Dorsolateral prefrontal cortex (tissue), 120 donors: ENCODE measurements at regions of chr17 and their contacts with region 1.

Region 1: GRCh38 chr17:21275579-21276263 is 8.8 kb upstream of the MAP2K3 start:
- DNase-seq: peak; percentile 92 to 98 (median 96)
- H3K4me3 ChIP-seq: peak overlapping the region; percentile 48 to 98 (median 79)
- H3K27ac ChIP-seq: peak overlapping the region in 50 of 59 donors; percentile 0 to 90 (median 72)
- H3K27me3 ChIP-seq: no peaks in the 10 kb centered on the region
- CTCF ChIP-seq: peak in 40 of 56 donors; percentile 5 to 58 (median 26)

Region 2: GRCh38 chr17:21126645-21127510 is 148.8 kb before region 1 on chr17 and contains the start of gene DHRS7B:
- intact Hi-C with region 1: loop called in 1 of 2 experiments (anchors 5 kb)
- DNase-seq: peak; percentile 92 to 98 (median 96)
- H3K4me3 ChIP-seq: peak within 1 kb of the TSS; percentile 64 to 100 (median 90)
- H3K27ac ChIP-seq: peak within 1 kb of the TSS in 58 of 59 donors; percentile 15 to 94 (median 74)
- H3K27me3 ChIP-seq: no peaks in the 10 kb centered on the region
- CTCF ChIP-seq: peak in 21 of 56 donors; percentile 10 to 48 (median 21)
- total RNA-seq, gene DHRS7B: 13.4 to 31.5 (median 21.3) TPM

Region 3: GRCh38 chr17:21214015-21214776 is 61.5 kb before region 1 on chr17 and contains the start of gene TMEM11:
- intact Hi-C with region 1: loop called (anchors 5 to 10 kb)
- DNase-seq: peak; percentile 87 to 98 (median 96)
- H3K4me3 ChIP-seq: peak within 1 kb of the TSS; percentile 72 to 100 (median 98)
- H3K27ac ChIP-seq: peak within 1 kb of the TSS; percentile 59 to 98 (median 92)
- H3K27me3 ChIP-seq: no peaks in the 10 kb centered on the region
- CTCF ChIP-seq: peak in 43 of 56 donors; percentile 1 to 64 (median 32)
- total RNA-seq, gene TMEM11: 11.9 to 23.7 (median 17.4) TPM

Region 4: GRCh38 chr17:21252796-21253645 is 22.7 kb before region 1 on chr17 and contains the start of gene NATD1:
- intact Hi-C with region 1: loop called (anchors 1 to 2 kb)
- DNase-seq: peak; percentile 78 to 92 (median 87)
- H3K4me3 ChIP-seq: peak within 1 kb of the TSS; percentile 50 to 85 (median 67)
- H3K27ac ChIP-seq: peak within 1 kb of the TSS in 54 of 59 donors; percentile 9 to 92 (median 76)
- H3K27me3 ChIP-seq: no peaks in the 10 kb centered on the region
- CTCF ChIP-seq: peak in 20 of 56 donors; percentile 7 to 56 (median 27)
- total RNA-seq, gene NATD1: 5.2 to 13.5 (median 7.6) TPM

Region 5: DNA sequence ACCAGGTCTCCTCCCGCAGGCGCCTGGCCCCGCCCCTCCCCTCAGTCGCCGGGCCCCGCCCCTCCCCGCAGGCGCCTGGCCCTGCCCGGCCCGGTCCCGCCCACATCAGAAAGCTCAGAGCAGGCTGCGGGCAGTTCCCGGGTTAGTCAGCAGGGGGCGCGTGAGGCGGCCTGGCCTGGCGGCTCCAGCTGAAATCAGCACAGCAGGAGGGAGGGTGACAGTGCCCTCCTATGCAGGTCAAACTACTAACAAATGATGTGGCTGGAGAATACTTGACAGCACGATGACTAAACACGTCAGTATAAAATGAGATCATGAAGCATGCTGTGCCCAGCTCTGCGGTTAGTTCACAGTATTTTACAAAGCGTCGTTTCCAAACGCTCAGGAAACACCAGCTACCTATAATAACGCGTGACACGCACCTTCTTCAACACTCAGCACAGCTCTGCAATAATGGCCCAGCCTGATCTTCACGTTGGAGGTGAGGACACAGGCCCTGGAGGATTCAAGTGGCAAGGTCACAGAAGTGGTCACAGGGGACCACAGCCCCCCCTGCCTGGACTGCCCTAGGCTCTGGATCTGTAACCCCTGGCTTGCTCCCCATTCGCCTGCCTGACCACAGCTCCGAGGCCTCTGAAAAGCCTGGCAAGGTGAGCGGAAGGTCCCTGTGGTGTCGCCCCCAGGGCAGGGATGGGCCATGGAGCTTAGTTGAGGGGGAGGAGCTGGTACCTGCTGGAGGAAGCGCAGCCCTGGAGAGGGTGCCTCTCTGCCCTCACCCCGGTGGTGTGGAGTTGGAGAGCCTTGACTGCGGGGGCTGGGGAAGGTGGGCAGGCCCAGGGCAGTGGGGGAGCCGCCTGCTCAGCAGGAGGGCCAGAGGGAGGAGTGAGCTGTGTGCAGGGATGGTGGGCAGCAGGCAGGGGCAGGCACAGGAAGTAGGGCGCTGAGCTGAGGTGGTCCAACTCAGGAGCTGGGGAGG is 181.6 kb after region 1 on chr17:
- intact Hi-C with region 1: loop called (anchors 5 kb)
- DNase-seq: peak; percentile 71 to 88 (median 80)
- H3K4me3 ChIP-seq: peak overlapping the region in 5 of 59 donors; percentile 1 to 12 (median 6)
- H3K27ac ChIP-seq: no peak overlapping the region
- H3K27me3 ChIP-seq: no peaks in the 10 kb centered on the region
- CTCF ChIP-seq: peak; percentile 67 to 97 (median 90)

Region 6: DNA sequence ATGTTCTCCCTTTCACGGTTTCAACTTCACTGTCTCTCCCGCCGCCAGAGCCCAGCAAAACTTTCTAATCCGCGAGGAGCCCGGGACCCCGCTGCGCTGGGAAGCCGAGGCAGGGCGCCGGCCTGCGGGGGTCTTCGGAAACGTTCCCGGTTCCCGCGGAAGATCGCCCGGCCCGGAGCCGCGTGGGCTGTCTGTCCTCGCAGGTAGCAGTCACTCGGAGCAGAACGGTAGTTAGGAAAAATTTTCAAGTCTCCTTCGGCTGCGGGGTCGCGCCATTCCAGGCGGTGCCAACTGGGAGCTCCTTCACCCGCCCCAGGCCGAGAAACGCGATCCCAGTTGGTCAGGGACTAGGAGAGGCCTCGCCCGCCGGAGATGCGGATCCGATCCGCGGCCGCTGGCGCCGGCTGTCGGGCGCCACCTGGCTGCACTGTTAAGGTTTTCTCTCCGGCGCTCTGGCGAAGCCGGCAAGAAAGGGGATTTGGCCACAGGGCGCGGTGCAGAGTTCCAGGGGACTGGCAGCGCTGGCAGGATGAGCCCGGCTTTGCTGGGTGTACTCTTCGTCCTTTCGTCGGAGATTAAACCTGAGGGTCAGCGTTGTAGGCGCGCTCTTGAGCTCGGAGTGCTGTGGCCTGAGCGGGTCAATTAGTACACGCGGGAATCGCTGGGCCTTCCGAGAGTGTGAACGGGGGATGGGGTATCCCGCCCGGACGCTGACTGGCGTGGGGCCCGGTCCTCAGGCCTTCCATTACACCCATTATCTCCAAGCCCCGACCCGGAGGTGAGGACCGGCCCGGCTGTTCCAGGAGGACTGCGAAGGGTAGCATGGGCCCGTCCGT is 235.9 kb after region 1 on chr17:
- intact Hi-C with region 1: loop called (anchors 2 to 10 kb)
- DNase-seq: peak; percentile 69 to 89 (median 82)
- H3K4me3 ChIP-seq: peak overlapping the region; percentile 36 to 88 (median 67)
- H3K27ac ChIP-seq: peak overlapping the region in 34 of 59 donors; percentile 15 to 86 (median 50)
- H3K27me3 ChIP-seq: no peaks in the 10 kb centered on the region
- CTCF ChIP-seq: peak; percentile 46 to 97 (median 85)

Region 7: DNA sequence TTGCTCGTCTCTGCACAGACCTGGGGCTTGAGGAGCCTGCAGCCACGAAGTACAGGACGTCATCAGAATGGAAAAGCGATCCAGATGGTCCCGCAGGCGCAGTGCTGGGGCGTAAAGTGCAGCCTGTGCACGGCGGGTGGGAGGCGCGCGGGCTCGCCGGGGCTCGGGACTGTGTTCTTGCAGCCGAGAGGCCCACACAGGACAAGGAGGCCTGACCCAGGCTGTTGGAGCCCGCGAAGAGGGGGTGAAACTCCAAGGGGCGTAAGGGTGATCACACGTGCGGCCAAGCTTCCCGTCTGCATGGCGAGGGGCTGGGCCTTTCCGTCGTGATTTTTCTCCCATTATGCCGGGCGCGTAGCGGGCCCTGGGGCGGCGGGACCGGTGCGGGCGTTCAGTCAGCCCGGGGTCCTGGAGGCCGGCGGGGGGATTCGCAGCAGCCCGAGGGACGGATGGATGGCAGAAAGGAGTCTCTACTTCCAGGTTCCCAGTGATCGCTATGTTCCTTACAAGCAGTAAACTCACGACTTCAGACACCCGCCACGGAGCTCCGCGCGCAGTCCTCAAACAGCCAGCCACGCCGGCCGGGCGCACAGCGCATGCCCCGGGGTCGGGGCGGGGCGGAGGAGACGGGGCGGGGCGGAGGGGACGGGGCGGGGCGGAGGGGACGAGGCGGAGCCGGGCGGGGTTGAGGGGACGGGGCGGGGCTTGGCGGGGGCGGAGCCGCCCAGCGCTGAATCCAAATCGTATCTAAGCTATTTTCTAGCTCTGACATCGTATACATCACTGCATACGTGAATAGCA is 275.6 kb after region 1 on chr17:
- intact Hi-C with region 1: loop called in 1 of 2 experiments (anchors 5 kb)
- DNase-seq: peak; percentile 75 to 92 (median 84)
- H3K4me3 ChIP-seq: peak overlapping the region; percentile 61 to 92 (median 80)
- H3K27ac ChIP-seq: peak overlapping the region in 55 of 59 donors; percentile 19 to 91 (median 78)
- H3K27me3 ChIP-seq: no peaks in the 10 kb centered on the region
- CTCF ChIP-seq: peak in 7 of 56 donors; percentile 3 to 30 (median 12)